Activated CD8-positive, alpha-beta T cell treated with anti-CD3 and anti-CD28 coated beads, Interleukin-2, amount 10 ng/mL, durations not matched to agents 7 days and 5 days (primary cell): ENCODE measurements at regions of chr10 and their contacts with region 1.

Region 1: GRCh38 chr10:100743626-100744135 is 1.7 kb upstream of the PAX2 start:
- DNase-seq: peak; percentile 68
- ATAC-seq: peak; percentile 66
- H3K4me3 Mint-ChIP-seq: no peak overlapping the region
- H3K27ac Mint-ChIP-seq: no peak overlapping the region
- H3K4me1 Mint-ChIP-seq: peaks cover 26% of the 10 kb centered on the region
- H3K27me3 Mint-ChIP-seq: peaks cover 83% of the 10 kb centered on the region

Region 2: DNA sequence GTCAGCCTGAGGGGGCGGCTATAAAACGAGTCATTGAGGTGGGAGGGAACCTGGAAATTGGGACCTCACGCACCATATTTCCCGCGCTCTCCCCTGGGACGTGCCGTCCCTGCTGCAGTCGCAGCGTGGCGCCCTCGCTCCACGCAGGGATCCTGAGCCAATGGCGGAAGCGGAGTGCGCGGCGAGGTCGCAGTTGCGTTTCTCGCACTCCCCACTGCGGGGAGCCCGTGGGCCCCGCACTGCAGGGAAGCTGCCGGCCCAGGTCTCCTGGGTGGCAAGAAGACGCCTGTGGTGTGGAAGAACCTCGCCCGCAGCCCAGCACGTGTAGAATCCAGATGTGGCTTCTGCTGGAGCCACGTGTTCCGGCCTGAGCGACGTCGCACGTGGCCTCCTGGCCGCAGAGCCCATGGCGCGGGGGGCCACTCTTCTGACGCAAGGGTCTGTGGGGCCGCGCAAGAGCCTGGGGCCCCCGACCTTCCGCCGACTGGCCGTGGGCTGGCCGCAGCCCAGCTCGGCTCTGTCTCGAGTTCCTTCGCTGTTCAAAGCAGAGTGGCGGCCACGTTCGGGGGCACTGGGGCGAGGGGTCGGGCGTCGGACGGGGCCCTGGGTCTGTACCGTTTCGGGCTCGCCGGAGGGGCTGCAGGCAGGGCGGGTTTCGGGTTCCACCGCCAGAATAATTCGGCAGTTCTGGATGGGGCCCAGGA is 181.5 kb before region 1 on chr10:
- CTCF ChIA-PET with region 1: interaction called, 38 read pairs
- POLR2A ChIA-PET with region 1: interaction called, 3 read pairs
- DNase-seq: peak; percentile 83
- ATAC-seq: peak; percentile 95
- H3K4me3 Mint-ChIP-seq: no peak overlapping the region
- H3K27ac Mint-ChIP-seq: no peak overlapping the region
- H3K4me1 Mint-ChIP-seq: peaks cover 23% of the 10 kb centered on the region
- H3K27me3 Mint-ChIP-seq: peaks cover 27% of the 10 kb centered on the region

Region 3: GRCh38 chr10:100670828-100671479 is 72.7 kb before region 1 on chr10:
- CTCF ChIA-PET with region 1: interaction called, 14 read pairs
- POLR2A ChIA-PET with region 1: no interaction called
- DNase-seq: peak; percentile 68
- ATAC-seq: peak; percentile 94
- H3K4me3 Mint-ChIP-seq: no peak overlapping the region
- H3K27ac Mint-ChIP-seq: no peak overlapping the region
- H3K4me1 Mint-ChIP-seq: peaks cover 7% of the 10 kb centered on the region
- H3K27me3 Mint-ChIP-seq: peaks cover 55% of the 10 kb centered on the region

Region 4: DNA sequence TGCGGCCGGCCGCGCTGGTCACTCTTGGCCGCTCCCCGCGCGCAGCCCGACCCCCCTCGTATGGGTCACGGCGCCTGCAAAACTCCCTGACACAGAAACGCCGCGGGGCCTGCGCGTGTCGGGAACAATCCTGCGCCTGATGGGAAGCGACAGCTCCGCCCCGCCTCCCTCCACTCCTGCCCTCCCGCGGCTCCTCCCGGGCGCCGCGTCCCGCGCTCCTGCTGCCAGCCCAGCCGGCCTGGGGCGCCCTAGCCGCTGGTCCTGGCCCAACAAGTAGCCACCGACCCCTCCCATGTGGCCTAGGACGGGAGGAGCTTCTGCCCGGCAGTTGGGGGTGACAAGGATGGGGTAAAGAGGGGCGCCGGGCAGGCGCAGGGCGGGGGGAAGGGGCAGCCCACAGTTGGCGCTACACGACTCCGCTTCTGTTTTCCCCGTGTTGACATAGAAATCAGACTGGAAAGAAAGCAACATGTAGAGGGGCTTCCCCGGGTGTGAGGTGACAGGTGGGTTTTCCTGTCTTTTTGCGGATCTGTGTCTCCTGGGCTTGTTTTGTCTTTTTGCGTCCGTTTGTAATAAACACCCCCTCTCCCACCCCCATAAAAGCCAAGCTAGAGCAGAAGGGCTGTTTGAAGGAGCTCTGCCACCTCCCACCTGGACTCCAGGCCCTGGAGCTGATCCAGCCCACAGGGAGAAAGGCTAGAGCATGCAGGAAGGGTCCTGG is 33.4 kb before region 1 on chr10:
- CTCF ChIA-PET with region 1: interaction called, 15 read pairs
- POLR2A ChIA-PET with region 1: no interaction called
- DNase-seq: no peak
- ATAC-seq: no peak
- H3K4me3 Mint-ChIP-seq: no peak overlapping the region
- H3K27ac Mint-ChIP-seq: no peak overlapping the region
- H3K4me1 Mint-ChIP-seq: peaks cover 2% of the 10 kb centered on the region
- H3K27me3 Mint-ChIP-seq: peaks cover 79% of the 10 kb centered on the region

Region 5: DNA sequence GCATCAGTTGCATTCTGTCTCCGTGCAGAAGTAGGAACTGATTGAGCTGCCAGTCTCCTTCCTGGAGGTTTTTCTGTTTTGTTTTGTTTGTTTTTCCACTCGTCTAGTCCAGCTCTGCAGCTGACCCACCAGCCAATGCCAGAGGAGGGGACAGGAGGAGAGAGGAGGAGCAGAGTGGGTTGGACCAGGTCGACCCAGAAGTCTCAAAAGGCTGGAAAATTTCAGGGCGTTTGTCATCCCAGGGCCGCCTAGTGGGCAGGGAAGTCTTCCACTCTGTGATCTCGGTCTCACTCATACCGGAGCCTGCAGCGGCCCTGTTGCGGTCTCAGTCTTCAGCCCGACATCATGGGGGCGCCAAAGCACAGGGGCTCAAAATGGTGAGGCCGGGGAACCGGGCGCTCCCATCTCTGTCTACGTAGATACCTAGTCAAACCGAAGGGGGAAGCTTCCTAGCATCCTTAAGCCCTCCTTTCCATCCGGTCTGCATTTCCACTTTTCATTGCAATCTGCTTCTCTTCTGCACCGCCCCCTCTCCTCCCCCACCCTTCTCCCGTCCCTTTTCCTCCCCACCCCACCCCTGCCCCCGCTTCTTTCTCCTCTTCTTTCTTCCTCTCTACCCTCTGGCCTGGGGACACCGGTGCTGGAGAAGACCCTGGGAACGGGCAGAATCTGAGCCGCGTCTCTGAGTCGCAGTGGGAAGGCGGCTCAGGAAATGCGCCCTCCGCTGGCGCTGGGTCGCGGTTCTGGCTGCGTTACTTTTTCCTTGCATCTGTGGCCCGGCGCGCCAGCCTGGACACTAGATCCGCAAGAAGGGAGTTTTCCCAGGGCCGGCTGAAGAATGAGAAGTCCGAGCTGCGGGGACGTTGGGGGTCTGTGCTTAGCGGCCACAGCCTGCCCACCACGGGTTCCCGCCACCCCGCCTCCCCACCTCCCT is 14.5 kb before region 1 on chr10:
- CTCF ChIA-PET with region 1: interaction called, 16 read pairs
- POLR2A ChIA-PET with region 1: no interaction called
- DNase-seq: peak; percentile 53
- ATAC-seq: peak; percentile 48
- H3K4me3 Mint-ChIP-seq: peak overlapping the region; percentile 4
- H3K27ac Mint-ChIP-seq: no peak overlapping the region
- H3K4me1 Mint-ChIP-seq: peaks cover 23% of the 10 kb centered on the region
- H3K27me3 Mint-ChIP-seq: peaks cover 83% of the 10 kb centered on the region